Activated CD4-positive, alpha-beta T cell treated with anti-CD3 and anti-CD28 coated beads for 36 hours (primary cell): ENCODE measurements at regions of chr6 and their contacts with region 1.

Region 1: DNA sequence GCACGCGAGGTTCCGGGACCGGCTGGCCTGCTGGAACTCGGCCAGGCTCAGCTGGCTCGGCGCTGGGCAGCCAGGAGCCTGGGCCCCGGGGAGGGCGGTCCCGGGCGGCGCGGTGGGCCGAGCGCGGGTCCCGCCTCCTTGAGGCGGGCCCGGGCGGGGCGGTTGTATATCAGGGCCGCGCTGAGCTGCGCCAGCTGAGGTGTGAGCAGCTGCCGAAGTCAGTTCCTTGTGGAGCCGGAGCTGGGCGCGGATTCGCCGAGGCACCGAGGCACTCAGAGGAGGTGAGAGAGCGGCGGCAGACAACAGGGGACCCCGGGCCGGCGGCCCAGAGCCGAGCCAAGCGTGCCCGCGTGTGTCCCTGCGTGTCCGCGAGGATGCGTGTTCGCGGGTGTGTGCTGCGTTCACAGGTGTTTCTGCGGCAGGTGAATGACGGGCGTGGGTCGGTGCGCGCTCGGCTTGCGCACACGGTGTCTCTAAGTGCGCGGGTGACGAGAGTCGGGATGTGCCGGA is at the start of gene CDKN1A:
- DNase-seq: peak; percentile 88
- ATAC-seq: peak; percentile 61
- H3K4me3 Mint-ChIP-seq: peak within 1 kb of the TSS; percentile 85
- H3K27ac Mint-ChIP-seq: peak within 1 kb of the TSS; percentile 86
- H3K4me1 Mint-ChIP-seq: peaks cover 45% of the 10 kb centered on the region
- H3K27me3 Mint-ChIP-seq: peaks cover 12% of the 10 kb centered on the region
- total RNA-seq, gene CDKN1A: 31.3 to 35.9 TPM

Region 2: GRCh38 chr6:36131511-36132245 is 546.9 kb before region 1 on chr6:
- CTCF ChIA-PET with region 1: no interaction called
- POLR2A ChIA-PET with region 1: no interaction called
- intact Hi-C with region 1: loop called in 1 of 2 experiments (anchors 5 kb)
- DNase-seq: peak; percentile 80
- ATAC-seq: peak; percentile 84
- H3K4me3 Mint-ChIP-seq: peak overlapping the region; percentile 84
- H3K27ac Mint-ChIP-seq: peak overlapping the region; percentile 96
- H3K4me1 Mint-ChIP-seq: peaks cover 55% of the 10 kb centered on the region
- H3K27me3 Mint-ChIP-seq: no peaks in the 10 kb centered on the region

Region 3: GRCh38 chr6:36423101-36423824 is 255.3 kb before region 1 on chr6:
- CTCF ChIA-PET with region 1: no interaction called
- POLR2A ChIA-PET with region 1: no interaction called
- intact Hi-C with region 1: loop called (anchors 1 kb)
- DNase-seq: peak; percentile 99
- ATAC-seq: peak; percentile 97
- H3K4me3 Mint-ChIP-seq: peak overlapping the region; percentile 83
- H3K27ac Mint-ChIP-seq: peak overlapping the region; percentile 92
- H3K4me1 Mint-ChIP-seq: peaks cover 17% of the 10 kb centered on the region
- H3K27me3 Mint-ChIP-seq: no peaks in the 10 kb centered on the region

Region 4: DNA sequence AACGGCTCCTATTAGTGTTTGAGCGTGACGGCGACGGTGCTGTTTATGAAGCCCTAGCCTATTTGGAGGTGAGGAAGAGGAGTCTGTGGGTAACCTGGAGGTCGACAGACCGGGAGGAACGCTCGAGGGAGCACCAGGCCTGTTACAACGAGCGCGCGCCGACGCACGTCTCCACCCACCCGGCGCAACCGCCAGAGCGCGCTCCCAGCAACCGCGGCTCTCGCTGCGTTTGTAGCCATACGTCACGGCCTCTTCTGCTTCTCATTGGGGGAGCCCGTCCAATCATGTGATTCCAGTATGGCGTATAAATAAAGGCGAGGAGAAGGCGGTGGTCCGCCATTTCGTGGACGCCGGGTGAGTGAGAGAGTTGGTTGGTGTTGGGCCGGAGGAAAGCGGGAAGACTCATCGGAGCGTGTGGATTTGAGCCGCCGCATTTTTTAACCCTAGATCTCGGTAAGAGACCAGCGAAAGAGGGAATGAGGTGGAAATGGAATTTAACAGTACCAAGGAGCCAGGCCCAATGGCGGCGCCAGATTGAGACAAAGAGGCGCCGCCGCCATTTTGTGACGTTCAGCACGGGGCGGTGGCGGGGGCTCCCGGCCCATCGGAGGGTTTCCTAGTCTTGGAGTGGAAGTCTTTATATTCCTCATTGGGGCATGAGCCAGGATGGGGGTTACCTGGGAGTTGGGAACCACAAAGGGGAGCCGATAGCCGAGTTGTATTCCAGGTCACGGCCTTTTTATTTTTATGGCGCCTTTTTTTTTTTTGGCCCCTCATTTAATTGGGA is 84.4 kb before region 1 on chr6 and contains the start of gene SRSF3:
- CTCF ChIA-PET with region 1: no interaction called
- POLR2A ChIA-PET with region 1: interaction called, 4 read pairs
- intact Hi-C with region 1: loop called (anchors 1 to 5 kb)
- DNase-seq: peak; percentile 98
- ATAC-seq: peak; percentile 92
- H3K4me3 Mint-ChIP-seq: peak within 1 kb of the TSS; percentile 88
- H3K27ac Mint-ChIP-seq: peak within 1 kb of the TSS; percentile 99
- H3K4me1 Mint-ChIP-seq: peaks cover 21% of the 10 kb centered on the region
- H3K27me3 Mint-ChIP-seq: no peaks in the 10 kb centered on the region
- total RNA-seq, gene SRSF3: 298 to 464 TPM

Region 5: GRCh38 chr6:36623547-36624459 is 54.8 kb before region 1 on chr6:
- CTCF ChIA-PET with region 1: interaction called, 7 read pairs
- POLR2A ChIA-PET with region 1: no interaction called
- intact Hi-C with region 1: loop called (anchors 1 kb)
- DNase-seq: peak; percentile 86
- ATAC-seq: peak; percentile 82
- H3K4me3 Mint-ChIP-seq: no peak overlapping the region
- H3K27ac Mint-ChIP-seq: peak overlapping the region; percentile 45
- H3K4me1 Mint-ChIP-seq: peaks cover 18% of the 10 kb centered on the region
- H3K27me3 Mint-ChIP-seq: no peaks in the 10 kb centered on the region

Region 6: GRCh38 chr6:36874443-36875249 is 196.1 kb after region 1 on chr6 and contains the start of gene PPIL1:
- CTCF ChIA-PET with region 1: no interaction called
- POLR2A ChIA-PET with region 1: no interaction called
- intact Hi-C with region 1: loop called in 1 of 2 experiments (anchors 2 kb)
- DNase-seq: peak; percentile 90
- ATAC-seq: peak; percentile 80
- H3K4me3 Mint-ChIP-seq: peak within 1 kb of the TSS; percentile 98
- H3K27ac Mint-ChIP-seq: peak within 1 kb of the TSS; percentile 99
- H3K4me1 Mint-ChIP-seq: peaks cover 45% of the 10 kb centered on the region
- H3K27me3 Mint-ChIP-seq: peaks cover 7% of the 10 kb centered on the region
- total RNA-seq, gene PPIL1: 45.9 to 46.0 TPM

Region 7: GRCh38 chr6:36985808-36986703 is 307.5 kb after region 1 on chr6 and contains the start of gene MTCH1:
- CTCF ChIA-PET with region 1: no interaction called
- POLR2A ChIA-PET with region 1: no interaction called
- intact Hi-C with region 1: loop called in 1 of 2 experiments (anchors 1 kb)
- DNase-seq: peak; percentile 93
- ATAC-seq: peak; percentile 80
- H3K4me3 Mint-ChIP-seq: no peak within 1 kb of the TSS
- H3K27ac Mint-ChIP-seq: peak within 1 kb of the TSS; percentile 95
- H3K4me1 Mint-ChIP-seq: peaks cover 18% of the 10 kb centered on the region
- H3K27me3 Mint-ChIP-seq: no peaks in the 10 kb centered on the region
- total RNA-seq, gene MTCH1: 72.9 to 92.9 TPM